HAP-1 (cell line): ENCODE measurements at regions of chr15 and their contacts with region 1.

Region 1: GRCh38 chr15:27538325-27538724 is 560.8 kb downstream of the OCA2 start:
- DNase-seq: no peak
- H3K4me3 ChIP-seq: no peak overlapping the region
- H3K4me1 ChIP-seq: no peaks in the 10 kb centered on the region
- H3K27me3 ChIP-seq: no peaks in the 10 kb centered on the region

Region 2: DNA sequence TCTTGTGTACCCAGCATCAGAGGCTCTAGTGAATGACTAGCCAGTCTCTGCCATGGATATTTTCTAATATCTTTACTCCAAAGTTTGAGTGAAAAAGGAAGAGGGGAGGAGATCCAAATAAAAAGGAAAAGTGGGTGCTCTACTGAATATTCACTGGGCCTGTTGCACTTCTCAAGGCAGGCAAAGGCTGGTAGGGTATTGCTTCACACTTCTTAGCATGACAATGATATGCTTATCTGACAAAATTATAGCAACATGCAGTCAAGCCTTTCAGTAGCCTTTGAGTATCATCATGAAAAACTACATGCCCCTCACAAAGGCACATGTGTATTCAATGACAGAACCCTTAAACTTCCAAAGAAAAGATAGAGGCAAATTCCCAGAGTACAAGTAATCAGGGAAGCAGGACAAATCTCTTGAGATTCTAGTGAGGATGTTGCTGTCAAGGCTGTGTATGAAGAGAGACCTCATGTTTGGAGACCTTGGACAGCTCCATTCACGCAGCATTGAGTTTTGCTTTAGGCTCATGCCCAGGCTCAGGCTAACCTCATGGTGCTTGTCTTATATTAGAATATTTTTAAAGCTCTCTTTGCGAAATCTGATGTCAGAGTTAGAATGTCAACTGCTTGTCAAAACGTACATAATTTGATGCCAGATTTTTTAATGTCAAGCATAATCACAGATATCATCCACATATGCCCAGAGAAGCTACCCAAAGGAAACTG is 53.9 kb after region 1 on chr15:
- in situ Hi-C with region 1: loop called (anchors 10 kb)
- DNase-seq: no peak
- H3K4me3 ChIP-seq: no peak overlapping the region
- H3K4me1 ChIP-seq: no peaks in the 10 kb centered on the region
- H3K27me3 ChIP-seq: no peaks in the 10 kb centered on the region

Region 3: DNA sequence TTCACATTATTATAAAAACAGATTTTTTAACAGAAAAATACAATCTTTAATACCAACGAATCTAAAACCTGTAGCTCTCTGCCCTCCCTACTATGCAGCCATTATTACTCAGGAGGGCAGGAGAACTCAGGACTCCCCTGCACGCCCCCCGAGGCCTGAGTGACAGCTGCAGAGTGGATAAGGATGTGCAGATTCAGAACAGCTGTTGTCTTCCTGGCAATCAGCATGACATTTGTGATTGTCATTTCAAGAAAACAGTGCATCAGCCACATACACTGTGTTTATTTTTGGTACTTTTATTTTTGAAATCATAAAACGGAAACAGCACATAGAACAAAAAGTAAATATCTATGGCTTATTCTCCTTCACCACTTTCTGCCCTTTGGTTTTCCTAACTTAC is 110.0 kb after region 1 on chr15:
- in situ Hi-C with region 1: no loop called
- DNase-seq: no peak
- H3K4me3 ChIP-seq: no peak overlapping the region
- H3K4me1 ChIP-seq: no peaks in the 10 kb centered on the region
- H3K27me3 ChIP-seq: no peaks in the 10 kb centered on the region